Activated naive CD4-positive, alpha-beta T cell treated with anti-CD3 and anti-CD28 coated beads, Interleukin-2, amount 10 ng/mL, durations not matched to agents 7 days and 5 days (primary cell): ENCODE measurements at regions of chr4 and their contacts with region 1.

Region 1: DNA sequence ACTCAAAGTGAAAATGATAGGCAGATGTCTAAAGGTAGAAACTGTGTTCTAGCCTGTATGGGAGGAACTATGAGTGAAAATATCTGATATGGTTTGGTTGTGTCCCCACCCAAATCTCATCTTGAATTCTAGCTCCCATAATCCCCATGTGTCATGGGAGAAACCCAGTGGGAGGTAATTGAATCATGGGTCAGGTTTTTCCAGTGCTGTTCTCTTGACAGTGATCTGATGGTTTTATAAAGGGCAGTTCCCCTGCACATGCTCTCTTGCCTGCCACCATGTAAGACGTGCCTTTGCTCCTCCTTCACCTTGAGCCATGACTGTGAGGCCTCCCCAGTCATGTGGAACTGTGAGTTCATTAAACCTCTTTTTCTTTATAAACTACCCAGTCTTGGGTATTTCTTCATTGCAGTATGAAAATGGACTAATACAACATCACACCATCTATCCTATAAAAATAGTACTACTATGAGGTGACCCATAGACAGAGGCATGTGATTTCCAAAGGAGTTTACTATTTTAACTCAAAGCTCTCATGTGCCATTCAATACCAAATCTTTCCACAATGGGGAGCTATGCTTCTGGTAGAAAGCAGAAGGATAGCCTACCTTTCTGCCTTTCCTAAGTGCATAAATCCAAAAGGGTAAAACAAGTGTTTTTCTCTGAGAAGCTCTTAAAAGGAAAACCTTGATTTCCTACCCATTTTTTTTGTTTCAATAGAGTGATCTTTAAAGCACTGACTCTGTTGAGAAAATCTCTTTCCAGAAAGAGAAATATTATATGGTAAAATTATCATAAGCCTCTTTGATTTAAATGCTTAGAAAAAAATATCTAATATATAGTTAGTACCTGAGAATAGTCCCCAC is 38.8 kb downstream of the SEC31A start:
- DNase-seq: no peak
- H3K4me3 Mint-ChIP-seq: no peak overlapping the region
- H3K27ac Mint-ChIP-seq: peak overlapping the region; percentile 25
- H3K4me1 Mint-ChIP-seq: no peaks in the 10 kb centered on the region
- H3K27me3 Mint-ChIP-seq: no peaks in the 10 kb centered on the region

Region 2: DNA sequence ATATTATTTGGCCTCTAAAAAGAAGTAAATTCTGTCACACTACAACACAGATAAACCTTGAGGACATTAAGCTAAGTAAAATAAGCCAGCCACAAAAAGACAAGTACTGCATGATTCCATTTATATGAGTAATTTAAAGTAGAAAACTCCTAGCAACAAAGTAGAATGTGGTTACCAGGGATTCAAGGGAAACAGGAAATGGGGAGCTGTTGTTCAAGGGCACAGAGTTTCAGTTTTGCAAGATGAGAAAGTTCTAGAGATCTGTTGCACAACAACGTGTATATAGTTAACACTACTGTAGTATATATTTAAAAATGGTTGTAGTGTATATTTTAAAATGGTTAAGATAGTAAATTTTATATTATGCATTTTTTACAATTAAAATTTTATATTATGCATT is 13.5 kb after region 1 on chr4:
- CTCF ChIA-PET with region 1: interaction called, 34 read pairs
- DNase-seq: peak; percentile 46
- H3K4me3 Mint-ChIP-seq: peak overlapping the region; percentile 17
- H3K27ac Mint-ChIP-seq: peak overlapping the region; percentile 89
- H3K4me1 Mint-ChIP-seq: peaks cover 41% of the 10 kb centered on the region
- H3K27me3 Mint-ChIP-seq: no peaks in the 10 kb centered on the region

Region 3: DNA sequence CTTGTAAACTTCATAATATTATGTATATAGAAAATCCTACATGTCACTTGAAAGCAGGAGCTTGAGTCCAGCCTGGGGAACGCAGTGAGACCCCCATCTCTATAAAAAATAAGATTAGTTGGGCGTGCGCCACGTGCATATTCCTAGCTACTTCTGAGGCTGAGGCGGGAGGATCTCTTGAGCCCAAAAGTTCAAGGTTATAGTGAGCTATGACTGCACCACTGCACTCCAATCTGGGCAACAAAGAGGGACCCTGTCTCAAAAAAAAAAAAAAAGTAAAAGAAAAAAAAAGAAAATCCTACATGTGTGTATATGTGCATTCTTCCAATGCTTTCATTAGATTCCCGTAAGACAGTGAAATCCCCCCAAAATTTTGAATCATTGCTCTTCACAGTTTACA is 37.2 kb after region 1 on chr4:
- CTCF ChIA-PET with region 1: interaction called, 11 read pairs
- DNase-seq: no peak
- H3K4me3 Mint-ChIP-seq: peak overlapping the region; percentile 84
- H3K27ac Mint-ChIP-seq: peak overlapping the region; percentile 93
- H3K4me1 Mint-ChIP-seq: peaks cover 49% of the 10 kb centered on the region
- H3K27me3 Mint-ChIP-seq: no peaks in the 10 kb centered on the region

Region 4: DNA sequence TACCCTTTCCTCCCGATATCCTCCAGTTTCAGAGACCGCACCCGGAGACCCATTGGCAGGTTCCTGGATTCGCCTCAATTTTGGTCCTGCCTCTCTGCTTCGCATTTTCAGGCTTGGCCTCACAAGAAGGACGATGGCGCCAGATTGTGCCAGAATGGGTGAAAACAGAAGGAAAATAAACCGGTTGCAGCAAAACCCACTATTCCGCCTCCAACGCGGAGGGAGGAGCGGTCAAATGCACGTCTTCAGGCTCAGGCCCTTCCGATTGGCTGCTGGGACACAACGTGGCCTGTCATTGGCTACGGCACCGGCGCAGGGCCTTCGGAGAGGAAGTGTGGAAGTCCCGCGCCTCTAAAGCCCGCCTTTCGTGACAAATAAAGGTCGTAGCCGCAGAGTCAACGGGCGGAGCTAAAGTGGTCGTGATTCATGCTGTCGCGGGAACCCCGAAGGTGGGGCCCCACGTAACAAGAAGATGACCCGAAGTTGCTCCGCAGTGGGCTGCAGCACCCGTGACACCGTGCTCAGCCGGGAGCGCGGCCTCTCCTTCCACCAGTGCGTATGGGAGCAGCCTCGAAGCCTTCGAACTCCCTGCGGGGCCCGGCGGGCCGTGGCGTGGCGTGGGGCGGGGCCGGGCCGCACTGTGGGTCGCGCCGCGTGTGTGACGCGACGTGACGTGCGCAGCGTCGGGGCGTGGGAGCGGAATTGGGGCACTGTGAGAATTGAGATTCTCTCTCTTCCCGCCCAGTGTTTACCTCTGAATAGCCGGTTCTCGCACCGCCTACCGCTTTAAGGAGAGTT is 48.4 kb after region 1 on chr4 and contains the start of gene THAP9:
- CTCF ChIA-PET with region 1: interaction called, 91 read pairs
- DNase-seq: peak; percentile 99
- H3K4me3 Mint-ChIP-seq: no peak within 1 kb of the TSS
- H3K27ac Mint-ChIP-seq: no peak within 1 kb of the TSS
- H3K4me1 Mint-ChIP-seq: peaks cover 34% of the 10 kb centered on the region
- H3K27me3 Mint-ChIP-seq: no peaks in the 10 kb centered on the region

Region 5: GRCh38 chr4:83034630-83035494 is 182.7 kb after region 1 on chr4 and contains the start of gene COPS4:
- CTCF ChIA-PET with region 1: interaction called, 10 read pairs
- DNase-seq: peak; percentile 97
- H3K4me3 Mint-ChIP-seq: peak within 1 kb of the TSS; percentile 99
- H3K27ac Mint-ChIP-seq: peak within 1 kb of the TSS; percentile 100
- H3K4me1 Mint-ChIP-seq: peaks cover 29% of the 10 kb centered on the region
- H3K27me3 Mint-ChIP-seq: peaks cover 11% of the 10 kb centered on the region